ENCODE measurements at regions of chr4 and their contacts with region 1.

Region 1: DNA sequence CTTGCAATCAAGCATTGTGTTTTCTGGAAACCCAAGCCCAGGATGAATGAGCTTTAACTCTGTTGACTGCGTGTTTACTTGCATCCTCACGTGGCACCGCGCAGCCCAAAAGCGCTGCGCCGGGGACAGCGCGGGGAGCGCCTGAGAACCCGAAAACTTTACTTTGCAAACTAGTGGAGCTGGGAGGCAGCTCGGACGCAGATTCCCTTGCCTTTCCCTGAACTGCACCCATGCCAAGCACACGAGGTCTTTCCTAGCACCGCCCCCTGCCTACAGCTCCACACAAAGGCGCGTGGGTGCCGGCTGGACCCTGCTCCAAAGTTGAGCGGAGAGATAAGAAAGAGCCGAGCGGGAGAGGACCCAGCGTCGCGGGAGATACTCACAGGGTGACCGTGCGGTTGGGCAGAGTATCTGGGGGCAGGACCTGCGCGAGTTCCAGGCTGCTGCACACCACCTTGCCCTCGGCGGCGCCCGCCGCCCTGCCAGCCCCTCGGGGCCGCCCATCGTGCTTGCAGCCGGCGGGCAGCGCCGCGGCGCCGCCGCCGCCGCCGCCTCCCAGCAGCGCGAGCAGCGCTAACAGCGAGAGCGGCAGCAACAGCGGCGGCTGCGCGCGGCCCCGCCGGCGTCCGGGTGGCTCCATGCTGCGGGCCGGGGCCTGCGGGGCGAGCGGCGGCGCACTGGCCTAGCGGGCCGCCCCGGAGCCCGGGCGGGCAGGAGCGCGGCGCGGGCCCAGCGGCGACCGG is 550 bp downstream of the ADGRA3 start:
- DNase-seq: peak; percentile 66 to 68
- H3K4me3 ChIP-seq: peak overlapping the region; percentile 58 to 59
- H3K27ac ChIP-seq: peak overlapping the region; percentile 87
- H3K4me1 ChIP-seq: no peaks in the 10 kb centered on the region
- H3K27me3 ChIP-seq: no peaks in the 10 kb centered on the region
- CTCF ChIP-seq: peak in 2 of 4 experiments; percentile 18 to 20
- POLR2A ChIP-seq: peak in 1 of 2 donors; percentile 3

Region 2: DNA sequence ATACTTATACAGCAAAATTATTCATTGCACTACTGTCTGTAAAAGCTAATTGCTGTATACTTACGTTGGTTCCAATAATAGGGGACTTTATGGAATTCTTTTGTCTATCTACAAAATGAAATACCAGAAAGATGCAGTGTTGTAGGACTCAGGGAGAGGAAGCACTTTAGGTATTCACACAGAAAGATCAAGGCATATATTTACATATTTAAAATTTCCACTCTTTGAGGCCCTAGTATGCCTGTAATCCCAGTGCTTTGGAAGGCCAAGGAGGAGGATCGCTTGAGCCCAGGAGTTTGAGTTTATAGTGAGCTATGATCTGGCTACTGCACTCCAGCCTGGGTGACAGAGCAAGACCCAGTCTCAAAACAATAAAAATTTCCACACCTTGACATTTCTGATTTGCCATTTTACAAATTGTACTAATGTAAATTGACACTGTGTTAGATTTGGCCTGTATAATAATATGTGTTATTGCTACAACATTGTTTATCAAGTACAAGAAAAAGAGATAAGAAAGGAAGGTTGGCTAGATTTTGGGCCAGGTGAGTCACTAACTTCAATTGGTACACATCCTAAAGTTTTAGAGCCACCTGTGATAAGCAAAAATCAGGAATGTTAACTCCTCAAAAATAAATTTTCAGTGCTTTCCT is 34.5 kb before region 1 on chr4:
- intact Hi-C with region 1: loop called (anchors 2 kb)
- DNase-seq: no peak
- H3K4me3 ChIP-seq: no peak overlapping the region
- H3K27ac ChIP-seq: no peak overlapping the region
- H3K4me1 ChIP-seq: peaks cover 4 to 6% of the 10 kb centered on the region in 2 donors
- H3K27me3 ChIP-seq: no peaks in the 10 kb centered on the region
- CTCF ChIP-seq: no peak
- POLR2A ChIP-seq: no peak

Measured in uterus (tissue), 4 donors.